Activated CD8-positive, alpha-beta memory T cell treated with anti-CD3 and anti-CD28 coated beads, Interleukin-2, amount 10 ng/mL, durations not matched to agents 7 days and 5 days (primary cell): ENCODE measurements at regions of chr1 and their contacts with region 1.

Region 1: GRCh38 chr1:212035123-212035834 is at the starts of genes DTL and INTS7:
- DNase-seq: peak; percentile 100
- ATAC-seq: peak; percentile 90
- H3K4me3 Mint-ChIP-seq: peak within 1 kb of the TSS; percentile 93
- H3K27ac Mint-ChIP-seq: peak within 1 kb of the TSS; percentile 96
- H3K4me1 Mint-ChIP-seq: peaks cover 60% of the 10 kb centered on the region
- H3K27me3 Mint-ChIP-seq: no peaks in the 10 kb centered on the region
- total RNA-seq, gene DTL: 86.2 to 97.2 TPM
- total RNA-seq, gene INTS7: 31.7 to 32.8 TPM

Region 2: GRCh38 chr1:211680752-211681327 is 354.4 kb before region 1 on chr1:
- CTCF ChIA-PET with region 1: interaction called, 117 read pairs
- DNase-seq: peak; percentile 83
- ATAC-seq: peak; percentile 95
- H3K4me3 Mint-ChIP-seq: no peak overlapping the region
- H3K27ac Mint-ChIP-seq: peak overlapping the region; percentile 67
- H3K4me1 Mint-ChIP-seq: peaks cover 9% of the 10 kb centered on the region
- H3K27me3 Mint-ChIP-seq: peaks cover 3% of the 10 kb centered on the region

Region 3: GRCh38 chr1:212012034-212012740 is 23.1 kb before region 1 on chr1:
- CTCF ChIA-PET with region 1: interaction called, 15 read pairs
- DNase-seq: peak; percentile 81
- ATAC-seq: peak; percentile 98
- H3K4me3 Mint-ChIP-seq: no peak overlapping the region
- H3K27ac Mint-ChIP-seq: no peak overlapping the region
- H3K4me1 Mint-ChIP-seq: peaks cover 2% of the 10 kb centered on the region
- H3K27me3 Mint-ChIP-seq: no peaks in the 10 kb centered on the region

Region 4: DNA sequence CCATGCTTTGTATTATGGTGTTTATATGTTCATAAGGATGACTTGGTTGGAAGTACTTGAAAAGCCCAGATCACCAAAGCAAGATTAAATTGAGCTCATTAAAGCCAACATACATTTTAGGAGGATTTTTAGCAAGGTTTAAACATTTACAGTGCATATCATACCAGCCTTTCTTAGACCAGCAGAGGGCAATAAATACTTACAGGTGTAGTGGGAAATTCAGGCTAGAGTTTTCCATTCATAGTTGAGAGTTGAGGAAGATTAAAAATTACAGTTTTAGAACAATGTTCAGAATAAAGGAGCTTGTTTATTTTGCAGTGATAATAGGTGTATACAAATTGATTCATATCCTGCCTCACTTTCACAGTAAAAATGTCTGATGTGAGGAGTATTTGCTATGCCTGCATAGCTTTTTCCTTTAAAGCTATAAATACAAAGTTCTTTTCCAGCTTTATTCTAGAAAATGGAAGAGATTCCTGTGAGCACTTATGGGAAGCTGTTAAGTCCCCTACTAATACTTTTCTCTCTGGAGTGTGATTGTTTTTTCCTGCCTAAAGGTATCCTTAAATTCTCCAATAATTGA is 35.5 kb after region 1 on chr1:
- CTCF ChIA-PET with region 1: interaction called, 19 read pairs
- DNase-seq: no peak
- ATAC-seq: peak; percentile 47
- H3K4me3 Mint-ChIP-seq: no peak overlapping the region
- H3K27ac Mint-ChIP-seq: no peak overlapping the region
- H3K4me1 Mint-ChIP-seq: peaks cover 3% of the 10 kb centered on the region
- H3K27me3 Mint-ChIP-seq: no peaks in the 10 kb centered on the region

Region 5: DNA sequence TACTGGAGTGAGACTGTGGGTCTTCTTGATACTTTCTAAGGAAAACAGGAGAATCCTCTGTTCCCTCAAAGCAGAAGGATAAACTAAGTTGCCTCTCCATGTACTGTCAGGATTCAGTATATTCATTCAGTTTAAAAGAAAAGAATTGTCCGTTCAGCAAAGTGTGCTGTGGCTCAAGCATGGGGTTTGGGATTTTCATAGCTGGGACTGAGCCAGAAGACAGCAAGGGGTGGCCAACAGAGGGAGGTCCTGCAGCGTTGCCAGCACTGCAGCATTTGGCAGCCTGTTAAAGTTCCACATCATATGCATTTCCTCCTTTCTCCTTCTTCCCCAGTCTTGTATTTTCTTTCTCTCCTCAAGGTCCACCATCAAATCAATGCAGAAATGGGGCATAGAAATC is 75.3 kb after region 1 on chr1:
- CTCF ChIA-PET with region 1: no interaction called
- DNase-seq: no peak
- ATAC-seq: no peak
- H3K4me3 Mint-ChIP-seq: no peak overlapping the region
- H3K27ac Mint-ChIP-seq: no peak overlapping the region
- H3K4me1 Mint-ChIP-seq: peaks cover 3% of the 10 kb centered on the region
- H3K27me3 Mint-ChIP-seq: no peaks in the 10 kb centered on the region

Region 6: GRCh38 chr1:212291505-212292134 is 256.3 kb after region 1 on chr1:
- CTCF ChIA-PET with region 1: interaction called, 25 read pairs
- DNase-seq: no peak
- ATAC-seq: peak; percentile 84
- H3K4me3 Mint-ChIP-seq: peak overlapping the region; percentile 7
- H3K27ac Mint-ChIP-seq: peak overlapping the region; percentile 16
- H3K4me1 Mint-ChIP-seq: peaks cover 73% of the 10 kb centered on the region
- H3K27me3 Mint-ChIP-seq: no peaks in the 10 kb centered on the region